ENCODE measurements at regions of chr7 and their contacts with region 1.

Region 1: GRCh38 chr7:32204361-32205018 is 134.3 kb upstream of the PDE1C start:
- DNase-seq: peak; percentile 59 to 74
- ATAC-seq: peak; percentile 90 to 97 (median 94)
- H3K4me3 ChIP-seq: peak overlapping the region in 9 of 10 donors; percentile 6 to 51 (median 41)
- H3K27ac ChIP-seq: peak overlapping the region in 1 of 10 donors; percentile 26
- H3K4me1 ChIP-seq: peaks cover 0 to 6% (median 0%) of the 10 kb centered on the region in 9 donors
- H3K27me3 ChIP-seq: peaks cover 0 to 6% (median 0%) of the 10 kb centered on the region in 7 donors
- CTCF ChIP-seq: peak; percentile 50 to 89 (median 74)

Region 2: DNA sequence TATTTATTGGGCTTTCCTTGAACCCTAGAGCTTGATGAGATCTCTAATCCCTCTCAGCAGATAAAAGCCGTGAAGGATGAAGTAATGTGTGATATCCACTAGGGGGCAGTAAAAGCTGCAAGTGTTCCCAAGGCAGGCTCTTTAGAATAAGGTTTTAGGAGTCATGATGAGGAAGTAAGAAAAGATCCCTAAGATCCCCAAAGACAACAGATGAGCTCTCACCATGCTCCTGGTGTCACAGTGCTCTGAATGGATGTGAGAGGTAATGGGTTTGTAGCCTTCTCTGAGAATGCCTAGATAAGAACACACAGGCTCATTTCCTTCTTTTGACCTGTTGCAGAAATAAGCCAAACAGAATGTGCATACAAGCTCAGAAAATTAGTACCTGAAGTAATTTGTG is 761.0 kb before region 1 on chr7:
- intact Hi-C with region 1: loop called in 1 of 10 experiments (anchors 10 kb)
- DNase-seq: no peak
- ATAC-seq: peak in 1 of 8 donors; percentile 28
- H3K4me3 ChIP-seq: no peak overlapping the region
- H3K27ac ChIP-seq: no peak overlapping the region
- H3K4me1 ChIP-seq: no peaks in the 10 kb centered on the region
- H3K27me3 ChIP-seq: peaks cover 0 to 45% (median 27%) of the 10 kb centered on the region in 7 donors
- CTCF ChIP-seq: peak; percentile 46 to 85 (median 78)

Region 3: DNA sequence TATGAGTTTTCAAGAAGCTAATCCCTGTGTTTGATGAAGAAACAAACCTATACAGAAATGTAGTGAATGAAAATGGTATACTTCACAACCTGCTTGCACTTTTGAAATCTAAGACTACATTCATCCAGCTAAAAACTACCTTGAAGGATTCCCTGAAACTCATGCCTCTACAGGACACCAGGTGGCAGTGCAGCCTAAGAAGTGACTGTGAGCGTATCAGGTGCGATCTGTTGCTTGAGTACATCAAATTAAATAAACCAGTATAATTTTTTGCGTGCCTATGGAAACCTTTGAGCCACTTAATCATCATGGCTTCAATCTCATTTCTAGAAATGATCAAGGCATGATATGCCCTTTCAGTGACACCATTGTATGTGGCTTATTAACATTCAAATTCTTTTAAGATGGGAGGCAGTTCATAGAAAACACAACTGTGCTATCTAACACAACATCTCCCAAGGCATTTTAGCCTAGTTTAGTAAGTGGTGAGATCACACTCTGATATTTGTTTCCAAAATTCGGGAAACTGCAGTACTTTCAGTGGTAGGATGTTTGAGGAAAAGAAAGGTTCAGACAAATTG is 460.1 kb before region 1 on chr7:
- intact Hi-C with region 1: loop called (anchors 1 to 5 kb)
- DNase-seq: peak; percentile 35 to 51
- ATAC-seq: peak in 5 of 8 donors; percentile 60 to 76 (median 63)
- H3K4me3 ChIP-seq: no peak overlapping the region
- H3K27ac ChIP-seq: no peak overlapping the region
- H3K4me1 ChIP-seq: no peaks in the 10 kb centered on the region
- H3K27me3 ChIP-seq: no peaks in the 10 kb centered on the region
- CTCF ChIP-seq: peak; percentile 66 to 89 (median 84)

Region 4: DNA sequence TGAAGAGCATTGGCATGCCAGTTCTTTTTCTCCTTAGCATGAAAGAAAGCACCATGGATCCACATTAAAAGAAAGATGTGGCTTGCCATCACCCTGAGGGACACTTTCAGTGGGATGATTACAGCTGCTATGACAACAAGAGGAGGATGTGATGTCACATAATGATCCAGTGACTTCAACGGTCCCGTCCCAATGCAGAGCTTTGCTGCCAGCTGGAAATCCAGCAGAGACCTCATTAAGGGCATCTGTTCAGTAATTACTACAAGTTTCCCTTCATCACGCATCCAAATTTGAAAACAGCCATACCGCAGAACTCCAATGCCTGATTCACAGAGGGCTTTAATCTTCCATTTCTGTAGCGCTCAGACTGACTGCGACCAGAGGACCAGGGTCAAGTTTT is 79.1 kb after region 1 on chr7:
- intact Hi-C with region 1: no loop called
- DNase-seq: no peak
- ATAC-seq: no peak
- H3K4me3 ChIP-seq: no peak overlapping the region
- H3K27ac ChIP-seq: no peak overlapping the region
- H3K4me1 ChIP-seq: no peaks in the 10 kb centered on the region
- H3K27me3 ChIP-seq: peaks cover 0 to 6% (median 0%) of the 10 kb centered on the region in 7 donors
- CTCF ChIP-seq: no peak

Region 5: GRCh38 chr7:32347244-32347828 is 142.8 kb after region 1 on chr7:
- intact Hi-C with region 1: loop called in 1 of 10 experiments (anchors 5 kb)
- DNase-seq: peak in 1 of 2 donors; percentile 17
- ATAC-seq: no peak
- H3K4me3 ChIP-seq: no peak overlapping the region
- H3K27ac ChIP-seq: no peak overlapping the region
- H3K4me1 ChIP-seq: no peaks in the 10 kb centered on the region
- H3K27me3 ChIP-seq: peaks cover 0 to 6% (median 0%) of the 10 kb centered on the region in 7 donors
- CTCF ChIP-seq: peak; percentile 46 to 77 (median 69)

Measured in heart right ventricle (tissue), 16 donors.